WTC11 (cell line): ENCODE measurements at regions of chr3 and their contacts with region 1.

Region 1: GRCh38 chr3:14410503-14411165 is 8.2 kb downstream of the SLC6A6 start:
- DNase-seq: no peak
- ATAC-seq: no peak
- H3K4me3 Mint-ChIP-seq: no peak overlapping the region
- H3K27ac Mint-ChIP-seq: peak overlapping the region; percentile 94
- H3K4me1 Mint-ChIP-seq: peaks cover 81% of the 10 kb centered on the region
- H3K27me3 Mint-ChIP-seq: no peaks in the 10 kb centered on the region
- CTCF ChIP-seq: no peak

Region 2: DNA sequence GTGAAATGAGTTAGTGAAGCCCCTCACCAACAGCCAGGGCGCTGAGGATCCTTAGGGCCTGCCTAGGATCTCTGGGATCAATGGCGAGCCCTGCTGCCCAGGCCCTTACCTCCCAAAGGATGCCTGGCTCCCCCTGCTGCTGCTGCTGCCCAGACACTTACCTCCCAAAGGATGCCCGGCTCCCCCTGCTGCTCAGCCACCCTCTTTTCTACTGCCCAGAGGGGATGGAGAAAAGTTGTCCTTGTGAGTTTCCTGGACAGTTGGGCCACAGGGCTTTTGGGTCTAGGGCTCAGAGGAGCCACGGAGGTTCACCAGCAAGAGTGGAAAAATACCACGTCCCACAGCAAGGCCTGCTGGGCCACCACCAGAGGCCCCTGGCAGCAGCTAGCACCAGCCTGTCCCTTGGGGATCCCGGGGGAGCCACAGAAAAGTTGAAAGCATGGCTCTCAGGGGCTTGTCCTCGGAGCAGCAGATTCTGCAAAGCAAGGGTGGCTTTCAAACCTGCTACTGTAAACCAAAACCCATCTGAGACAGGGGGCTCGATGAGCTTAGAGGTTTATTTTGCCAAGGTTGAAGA is 51.2 kb after region 1 on chr3:
- CTCF ChIA-PET with region 1: interaction called, 10 read pairs
- POLR2A ChIA-PET with region 1: interaction called, 3 read pairs
- DNase-seq: peak; percentile 58
- ATAC-seq: peak; percentile 49
- H3K4me3 Mint-ChIP-seq: no peak overlapping the region
- H3K27ac Mint-ChIP-seq: no peak overlapping the region
- H3K4me1 Mint-ChIP-seq: peaks cover 28% of the 10 kb centered on the region
- H3K27me3 Mint-ChIP-seq: no peaks in the 10 kb centered on the region; the same call in 1 of the 2 replicates
- CTCF ChIP-seq: no peak